ENCODE measurements at regions of chr16 and their contacts with region 1.

Region 1: GRCh38 chr16:10181196-10182162 is 749 bp downstream of the GRIN2A start:
- DNase-seq: peak; percentile 44
- H3K4me3 ChIP-seq: no peak overlapping the region
- H3K27ac ChIP-seq: no peak overlapping the region
- H3K4me1 ChIP-seq: no peaks in the 10 kb centered on the region
- H3K27me3 ChIP-seq: peaks cover 19% of the 10 kb centered on the region
- CTCF ChIP-seq: peak; percentile 75 to 90 (median 80)
- POLR2A ChIP-seq: no peak

Region 2: GRCh38 chr16:9159839-9160550 is 1021.5 kb before region 1 on chr16:
- intact Hi-C with region 1: loop called (anchors 10 kb)
- DNase-seq: peak; percentile 44
- H3K4me3 ChIP-seq: no peak overlapping the region
- H3K27ac ChIP-seq: no peak overlapping the region
- H3K4me1 ChIP-seq: no peaks in the 10 kb centered on the region
- H3K27me3 ChIP-seq: no peaks in the 10 kb centered on the region
- CTCF ChIP-seq: peak; percentile 48 to 69 (median 54)
- POLR2A ChIP-seq: no peak

Region 3: DNA sequence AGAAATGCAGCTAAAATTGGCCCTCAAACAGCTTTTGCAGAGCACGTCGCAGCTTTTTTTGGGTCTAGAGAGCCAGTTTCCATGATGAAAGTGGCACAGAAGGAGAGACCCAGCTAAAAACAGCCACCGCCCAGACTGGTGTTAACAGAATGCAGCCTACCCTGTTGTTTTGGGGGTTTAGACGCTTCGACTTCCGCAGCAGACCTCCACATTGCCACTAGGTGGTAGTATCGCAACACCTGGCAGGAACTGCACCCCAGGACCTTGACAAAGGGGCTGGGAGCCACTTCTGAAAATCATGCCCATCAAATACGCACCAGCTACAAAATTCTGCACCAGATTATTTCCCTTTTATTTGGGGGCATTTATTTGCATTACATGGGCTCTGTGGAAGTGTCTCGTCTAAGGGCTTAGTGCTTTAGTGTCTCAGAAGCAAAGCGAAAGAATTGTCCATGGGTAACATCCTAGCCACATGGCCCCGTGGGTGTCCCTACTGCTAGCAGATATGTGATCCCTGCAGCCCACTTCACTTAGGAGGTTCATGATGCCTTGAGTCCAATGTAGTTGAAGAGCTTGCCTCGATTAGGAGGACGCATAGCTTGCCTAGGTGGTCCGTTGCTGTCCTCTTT is 922.9 kb before region 1 on chr16:
- intact Hi-C with region 1: loop called (anchors 2 kb)
- DNase-seq: peak; percentile 7
- H3K4me3 ChIP-seq: no peak overlapping the region
- H3K27ac ChIP-seq: no peak overlapping the region
- H3K4me1 ChIP-seq: no peaks in the 10 kb centered on the region
- H3K27me3 ChIP-seq: no peaks in the 10 kb centered on the region
- CTCF ChIP-seq: peak in 3 of 4 experiments; percentile 48 to 61 (median 60)
- POLR2A ChIP-seq: no peak

Region 4: DNA sequence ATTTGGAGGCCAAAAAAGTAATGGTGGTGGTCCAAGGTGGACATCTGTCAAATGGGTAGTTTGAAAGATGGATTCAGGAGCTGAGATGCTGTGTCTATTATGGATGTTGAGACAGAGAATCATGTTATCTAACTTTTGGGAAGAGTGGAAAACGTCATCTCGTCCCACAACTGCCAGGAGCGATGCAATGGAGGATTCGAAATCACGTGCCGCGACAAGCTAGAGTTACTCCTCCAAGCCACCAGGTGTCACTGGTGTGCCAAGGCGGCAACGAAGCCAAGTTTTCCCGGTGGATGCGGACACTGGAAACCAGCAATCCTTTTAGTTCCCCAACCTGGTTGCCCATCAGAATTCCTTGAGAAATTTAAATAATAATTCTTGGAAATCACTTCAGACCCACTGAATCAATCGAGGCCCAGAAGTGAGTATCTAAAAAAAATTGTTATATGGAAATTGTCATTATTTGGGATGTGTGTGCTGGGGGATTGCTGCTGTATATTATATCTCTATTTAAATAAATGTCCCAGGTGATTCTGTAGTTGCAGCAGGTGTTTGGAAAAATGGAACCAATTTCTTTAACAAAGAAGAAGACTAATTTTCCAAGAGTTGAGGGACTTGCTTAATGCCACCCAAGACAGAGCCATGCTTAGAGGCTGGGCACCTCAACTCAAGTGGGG is 883.9 kb before region 1 on chr16:
- intact Hi-C with region 1: loop called (anchors 5 kb)
- DNase-seq: peak; percentile 10
- H3K4me3 ChIP-seq: no peak overlapping the region
- H3K27ac ChIP-seq: no peak overlapping the region
- H3K4me1 ChIP-seq: no peaks in the 10 kb centered on the region
- H3K27me3 ChIP-seq: no peaks in the 10 kb centered on the region
- CTCF ChIP-seq: peak; percentile 13 to 54 (median 51)
- POLR2A ChIP-seq: no peak

Region 5: DNA sequence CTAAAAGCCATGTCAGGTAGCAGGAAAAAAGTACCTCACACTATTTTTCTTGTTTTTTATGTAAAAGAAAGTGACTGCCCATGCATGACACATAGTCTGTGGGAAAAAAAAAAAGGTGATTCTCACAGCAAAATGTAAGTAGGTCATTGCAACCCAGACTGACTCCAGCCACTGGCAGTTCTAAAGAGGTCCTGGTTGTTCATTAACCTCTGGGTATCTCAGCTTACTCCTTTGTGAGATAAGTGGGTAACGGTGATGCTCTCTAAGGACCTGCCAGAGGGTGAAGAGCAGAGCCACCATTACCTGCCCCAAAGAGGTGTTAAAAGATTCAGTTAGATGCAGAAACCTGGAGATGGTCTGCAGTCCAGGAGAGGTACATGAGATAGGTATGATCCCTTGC is 531.2 kb before region 1 on chr16:
- intact Hi-C with region 1: loop called (anchors 10 kb)
- DNase-seq: no peak
- H3K4me3 ChIP-seq: no peak overlapping the region
- H3K27ac ChIP-seq: no peak overlapping the region
- H3K4me1 ChIP-seq: no peaks in the 10 kb centered on the region
- H3K27me3 ChIP-seq: no peaks in the 10 kb centered on the region
- CTCF ChIP-seq: no peak
- POLR2A ChIP-seq: no peak

Region 6: DNA sequence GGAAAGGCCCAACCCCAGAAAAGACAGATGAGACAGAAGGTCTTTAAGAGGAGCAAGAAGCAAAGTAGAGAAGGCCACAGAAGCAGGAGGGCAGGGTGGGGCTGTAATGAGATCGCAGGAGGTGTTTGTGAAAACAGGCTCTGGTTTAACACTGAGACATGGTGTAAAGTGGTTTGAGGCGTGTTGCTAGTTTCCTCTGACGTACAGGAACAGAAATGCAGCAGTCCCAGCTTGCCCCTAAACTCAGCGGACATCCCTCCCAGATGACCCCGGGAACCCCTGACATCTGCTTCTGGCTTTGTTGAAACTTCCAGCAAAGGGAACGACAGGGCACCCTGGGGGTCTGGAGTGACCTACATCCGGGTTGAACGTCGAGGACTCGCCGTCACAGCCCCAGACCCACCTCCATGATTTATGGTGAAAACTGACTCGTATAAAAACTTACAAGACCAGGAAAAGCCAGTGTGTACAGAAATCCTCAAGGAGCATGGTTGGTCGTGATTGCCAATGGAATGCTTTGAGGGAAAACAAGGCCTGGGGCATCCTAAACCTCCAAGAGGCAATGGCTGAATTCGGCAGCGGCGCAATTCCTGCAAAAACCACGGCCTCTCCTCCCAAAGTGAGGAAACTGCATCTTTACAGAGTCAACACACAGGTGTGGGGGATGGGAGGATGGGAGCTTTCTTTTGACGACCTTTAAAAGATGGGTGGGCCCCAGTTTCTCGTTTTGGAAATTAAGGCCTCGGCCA is 1379.4 kb after region 1 on chr16:
- intact Hi-C with region 1: no loop called
- DNase-seq: no peak
- H3K4me3 ChIP-seq: no peak overlapping the region
- H3K27ac ChIP-seq: peak overlapping the region; percentile 62 to 67
- H3K4me1 ChIP-seq: peaks cover 4% of the 10 kb centered on the region
- H3K27me3 ChIP-seq: no peaks in the 10 kb centered on the region
- CTCF ChIP-seq: no peak
- POLR2A ChIP-seq: no peak